Endothelial cell of umbilical vein (primary cell): ENCODE measurements at regions of chr3 and their contacts with region 1.

Region 1: GRCh38 chr3:72818092-72818773 is 30.0 kb downstream of the SHQ1 start:
- DNase-seq: peak; percentile 54
- H3K4me3 ChIP-seq: no peak overlapping the region
- H3K27ac ChIP-seq: no peak overlapping the region
- H3K4me1 ChIP-seq: peaks cover 25% of the 10 kb centered on the region
- H3K27me3 ChIP-seq: no peaks in the 10 kb centered on the region
- CTCF ChIP-seq: peak; percentile 25 to 47
- POLR2A ChIP-seq: no peak

Region 2: DNA sequence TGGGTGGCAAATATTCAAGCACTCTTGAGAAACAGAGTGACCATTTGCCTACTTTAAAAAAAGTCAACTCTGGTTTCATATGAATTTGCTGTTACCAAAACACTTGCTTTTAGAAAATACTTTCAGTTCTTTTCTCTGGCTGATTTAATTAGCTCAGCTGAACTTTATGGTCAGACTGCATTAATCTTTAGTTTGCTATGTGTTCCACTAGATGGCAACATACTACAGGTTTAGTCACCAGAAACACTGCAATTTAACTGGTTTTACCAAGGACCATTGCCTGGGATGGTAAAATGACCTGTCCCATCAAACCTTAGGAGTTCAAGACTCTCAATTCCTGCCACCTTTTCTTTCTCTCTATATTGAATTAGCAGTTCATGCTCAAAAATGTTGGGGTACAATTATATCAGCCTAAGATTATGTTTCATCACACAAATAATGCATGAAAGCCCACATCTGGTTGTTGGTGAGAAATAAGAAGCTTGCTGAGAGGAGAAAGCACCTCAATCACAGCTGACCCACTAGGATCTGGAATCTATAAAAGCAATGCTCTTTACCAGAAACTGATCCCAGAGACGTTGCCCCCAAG is 1107.2 kb before region 1 on chr3:
- CTCF ChIA-PET with region 1: interaction called, 15 read pairs
- POLR2A ChIA-PET with region 1: no interaction called
- dilution Hi-C with region 1: no loop called
- intact Hi-C with region 1: loop called (anchors 1 kb)
- DNase-seq: peak; percentile 51
- H3K4me3 ChIP-seq: no peak overlapping the region
- H3K27ac ChIP-seq: no peak overlapping the region
- H3K4me1 ChIP-seq: no peaks in the 10 kb centered on the region
- H3K27me3 ChIP-seq: peaks cover 0 to 4% of the 10 kb centered on the region in 2 experiments
- CTCF ChIP-seq: peak; percentile 37 to 49
- POLR2A ChIP-seq: no peak

Region 3: DNA sequence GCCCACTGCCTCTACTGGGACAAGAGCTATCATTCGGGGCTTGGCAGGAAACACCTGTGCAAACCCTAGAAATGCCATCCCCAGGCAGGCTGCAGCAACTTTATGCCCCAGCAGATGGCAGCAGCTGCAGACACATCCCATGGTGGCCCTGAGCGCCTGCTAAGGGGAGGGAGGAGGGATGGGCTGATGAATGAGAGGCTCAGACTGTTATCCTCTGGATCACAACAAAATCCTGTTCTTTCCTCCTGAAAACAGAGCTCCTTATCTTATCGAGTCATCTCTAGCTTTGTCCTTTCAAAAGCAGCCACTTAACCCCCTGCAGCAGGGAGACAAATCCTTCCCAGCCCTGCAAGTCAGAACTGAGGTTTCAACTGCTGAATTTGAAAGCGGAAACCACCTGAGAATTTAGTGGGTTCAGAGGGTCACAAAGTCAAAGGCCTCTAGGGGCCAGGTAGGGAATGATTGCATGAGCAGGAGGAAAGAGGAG is 942.7 kb before region 1 on chr3:
- CTCF ChIA-PET with region 1: interaction called, 152 read pairs
- POLR2A ChIA-PET with region 1: no interaction called
- dilution Hi-C with region 1: no loop called
- intact Hi-C with region 1: loop called (anchors 1 kb)
- DNase-seq: peak; percentile 74
- H3K4me3 ChIP-seq: no peak overlapping the region
- H3K27ac ChIP-seq: no peak overlapping the region
- H3K4me1 ChIP-seq: no peaks in the 10 kb centered on the region
- H3K27me3 ChIP-seq: no peaks in the 10 kb centered on the region
- CTCF ChIP-seq: peak; percentile 76 to 90
- POLR2A ChIP-seq: no peak

Region 4: DNA sequence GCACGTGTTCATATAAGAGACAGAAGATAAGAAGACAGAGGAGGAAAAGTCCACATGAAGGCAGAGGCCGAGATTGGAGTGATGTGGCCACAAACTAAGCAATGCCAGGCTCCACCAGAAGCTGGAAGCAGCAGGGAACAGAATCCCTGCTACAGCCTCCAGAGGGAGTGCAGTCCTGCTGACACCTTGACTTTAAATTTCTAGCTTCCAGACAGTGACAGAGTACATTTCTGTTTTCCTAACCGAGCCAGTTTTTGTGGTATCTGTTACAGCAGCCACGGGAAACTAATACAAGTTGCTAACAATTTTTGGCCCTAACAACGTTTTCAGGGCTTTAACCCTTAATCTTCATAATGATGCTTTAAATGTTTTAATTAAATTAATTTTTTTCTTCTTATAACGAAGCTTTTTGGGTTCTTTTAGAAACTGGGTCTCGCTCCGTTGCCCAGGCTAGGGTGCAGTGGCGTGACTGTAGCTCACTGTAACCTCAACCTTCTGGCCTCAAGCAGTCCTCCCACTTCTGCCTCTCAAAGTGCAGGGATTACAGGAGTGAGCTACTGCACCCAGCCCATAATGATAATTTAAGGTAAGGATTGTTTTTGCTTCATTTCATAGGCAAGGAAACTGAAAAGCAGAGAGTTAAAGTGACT is 831.0 kb before region 1 on chr3:
- CTCF ChIA-PET with region 1: interaction called, 24 read pairs
- POLR2A ChIA-PET with region 1: no interaction called
- dilution Hi-C with region 1: no loop called
- intact Hi-C with region 1: no loop called
- DNase-seq: peak; percentile 6
- H3K4me3 ChIP-seq: no peak overlapping the region
- H3K27ac ChIP-seq: no peak overlapping the region
- H3K4me1 ChIP-seq: no peaks in the 10 kb centered on the region
- H3K27me3 ChIP-seq: no peaks in the 10 kb centered on the region
- CTCF ChIP-seq: peak in 1 of 2 donors; percentile 34
- POLR2A ChIP-seq: no peak

Region 5: GRCh38 chr3:72447059-72447946 is 370.9 kb before region 1 on chr3:
- CTCF ChIA-PET with region 1: no interaction called
- POLR2A ChIA-PET with region 1: no interaction called
- dilution Hi-C with region 1: no loop called
- intact Hi-C with region 1: loop called (anchors 5 kb)
- DNase-seq: peak; percentile 84
- H3K4me3 ChIP-seq: peak overlapping the region in 2 of 3 experiments; percentile 23 to 95
- H3K27ac ChIP-seq: no peak overlapping the region
- H3K4me1 ChIP-seq: peaks cover 10% of the 10 kb centered on the region
- H3K27me3 ChIP-seq: peaks cover 11 to 14% of the 10 kb centered on the region in 2 experiments
- CTCF ChIP-seq: no peak
- POLR2A ChIP-seq: no peak

Region 6: DNA sequence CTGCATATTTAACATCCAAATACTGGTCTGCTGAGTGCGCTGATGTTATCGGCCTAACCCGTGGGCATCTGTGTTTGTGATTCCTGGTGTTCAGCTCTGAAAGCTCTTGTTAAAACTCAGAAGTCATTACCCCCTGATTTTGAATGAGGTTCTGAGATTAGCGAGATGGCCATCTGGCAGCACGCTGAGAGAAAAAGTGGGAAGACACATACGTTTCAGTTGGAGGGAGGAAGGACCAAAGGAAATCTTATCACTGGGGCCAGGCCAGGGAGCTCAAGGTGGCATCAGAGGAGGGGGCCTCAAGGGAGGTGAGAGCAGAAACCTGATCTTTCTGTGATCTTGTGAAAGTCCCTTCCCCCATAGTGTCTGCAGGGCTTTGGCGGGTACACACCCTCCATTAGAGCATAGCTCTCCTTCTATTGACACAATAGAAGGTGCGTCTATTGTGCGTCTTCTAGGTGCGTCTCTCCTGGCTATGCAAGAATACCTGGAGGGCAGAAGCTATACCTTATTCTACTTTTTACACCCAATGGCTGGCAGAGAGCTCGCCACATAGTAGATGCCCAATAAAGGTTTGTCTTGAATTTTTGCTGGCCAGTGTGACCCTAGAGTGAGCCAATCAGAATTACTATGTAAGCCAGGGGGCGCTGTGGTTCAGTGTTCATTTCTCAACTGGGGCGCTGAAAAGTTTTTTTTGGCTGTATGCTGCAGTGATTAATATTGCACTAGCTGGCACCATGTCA is 152.4 kb before region 1 on chr3:
- CTCF ChIA-PET with region 1: interaction called, 201 read pairs
- POLR2A ChIA-PET with region 1: no interaction called
- dilution Hi-C with region 1: no loop called
- intact Hi-C with region 1: loop called (anchors 1 kb)
- DNase-seq: peak; percentile 50
- H3K4me3 ChIP-seq: no peak overlapping the region
- H3K27ac ChIP-seq: no peak overlapping the region
- H3K4me1 ChIP-seq: no peaks in the 10 kb centered on the region
- H3K27me3 ChIP-seq: no peaks in the 10 kb centered on the region
- CTCF ChIP-seq: peak; percentile 61
- POLR2A ChIP-seq: no peak

Region 7: DNA sequence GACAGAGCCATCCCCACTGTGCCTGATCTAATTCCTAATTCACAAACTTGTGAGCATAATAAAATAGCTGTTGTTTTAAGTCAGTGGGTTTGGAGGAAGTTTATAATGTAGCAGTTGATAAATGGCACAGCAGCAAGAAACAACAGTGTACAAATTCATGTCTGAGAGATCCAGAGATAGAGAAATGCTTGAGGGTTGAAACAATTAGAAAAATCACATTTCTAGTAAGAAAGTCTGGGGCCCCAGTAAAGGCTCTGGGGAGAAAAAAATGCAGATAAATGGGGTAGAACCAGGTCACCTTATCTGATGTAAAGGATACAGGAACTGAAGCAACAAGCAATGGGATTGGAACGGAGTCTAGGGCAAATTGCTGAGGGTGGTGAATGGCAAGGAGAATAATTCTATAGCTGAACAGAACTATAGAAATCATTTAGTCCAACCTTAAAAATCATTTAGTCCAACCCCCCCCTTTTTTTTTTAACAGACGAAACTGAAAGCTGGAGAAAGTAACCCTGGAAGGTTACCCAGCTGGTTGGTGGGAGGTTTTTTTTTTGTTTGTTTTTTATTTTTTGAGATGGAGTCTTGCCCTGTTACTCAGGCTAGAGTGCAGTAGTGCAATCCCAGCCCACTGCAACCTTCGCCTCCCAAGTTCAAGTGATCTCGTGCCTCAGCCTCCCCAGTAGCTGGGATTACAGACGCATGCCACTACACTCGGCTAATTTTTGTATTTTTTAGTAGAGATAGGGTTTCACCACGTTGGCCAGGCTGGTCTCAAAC is 44.3 kb after region 1 on chr3:
- CTCF ChIA-PET with region 1: no interaction called
- POLR2A ChIA-PET with region 1: no interaction called
- dilution Hi-C with region 1: no loop called
- intact Hi-C with region 1: no loop called
- DNase-seq: no peak
- H3K4me3 ChIP-seq: no peak overlapping the region
- H3K27ac ChIP-seq: no peak overlapping the region
- H3K4me1 ChIP-seq: no peaks in the 10 kb centered on the region
- H3K27me3 ChIP-seq: peaks cover 2 to 5% of the 10 kb centered on the region in 2 experiments
- CTCF ChIP-seq: no peak
- POLR2A ChIP-seq: no peak